GM12878 (cell line): ENCODE measurements at regions of chr13 and their contacts with region 1.

Region 1: GRCh38 chr13:26985285-26985878 is 186.2 kb downstream of the USP12 start:
- DNase-seq: peak; percentile 49
- ATAC-seq: peak; percentile 91
- H3K4me3 ChIP-seq: no peak overlapping the region
- H3K27ac ChIP-seq: no peak overlapping the region
- H3K4me1 ChIP-seq: no peaks in the 10 kb centered on the region
- H3K27me3 ChIP-seq: no peaks in the 10 kb centered on the region
- CTCF ChIP-seq: peak; percentile 64 to 93 (median 68); a peak in 4 of 6 replicates
- EP300 ChIP-seq: no peak
- POLR2A ChIP-seq: no peak
- RAD21 ChIP-seq: peak; percentile 93

Region 2: GRCh38 chr13:26401578-26402021 is 583.8 kb before region 1 on chr13:
- CTCF ChIA-PET with region 1: no interaction called
- POLR2A ChIA-PET with region 1: no interaction called
- RAD21 ChIA-PET with region 1: no interaction called
- SMC1A ChIA-PET with region 1: no interaction called
- in situ Hi-C with region 1: no loop called
- intact Hi-C with region 1: no loop called
- DNase-seq: no peak
- ATAC-seq: no peak
- H3K4me3 ChIP-seq: no peak overlapping the region
- H3K27ac ChIP-seq: no peak overlapping the region
- H3K4me1 ChIP-seq: no peaks in the 10 kb centered on the region
- H3K27me3 ChIP-seq: no peaks in the 10 kb centered on the region
- CTCF ChIP-seq: no peak
- EP300 ChIP-seq: no peak
- POLR2A ChIP-seq: no peak
- RAD21 ChIP-seq: no peak

Region 3: DNA sequence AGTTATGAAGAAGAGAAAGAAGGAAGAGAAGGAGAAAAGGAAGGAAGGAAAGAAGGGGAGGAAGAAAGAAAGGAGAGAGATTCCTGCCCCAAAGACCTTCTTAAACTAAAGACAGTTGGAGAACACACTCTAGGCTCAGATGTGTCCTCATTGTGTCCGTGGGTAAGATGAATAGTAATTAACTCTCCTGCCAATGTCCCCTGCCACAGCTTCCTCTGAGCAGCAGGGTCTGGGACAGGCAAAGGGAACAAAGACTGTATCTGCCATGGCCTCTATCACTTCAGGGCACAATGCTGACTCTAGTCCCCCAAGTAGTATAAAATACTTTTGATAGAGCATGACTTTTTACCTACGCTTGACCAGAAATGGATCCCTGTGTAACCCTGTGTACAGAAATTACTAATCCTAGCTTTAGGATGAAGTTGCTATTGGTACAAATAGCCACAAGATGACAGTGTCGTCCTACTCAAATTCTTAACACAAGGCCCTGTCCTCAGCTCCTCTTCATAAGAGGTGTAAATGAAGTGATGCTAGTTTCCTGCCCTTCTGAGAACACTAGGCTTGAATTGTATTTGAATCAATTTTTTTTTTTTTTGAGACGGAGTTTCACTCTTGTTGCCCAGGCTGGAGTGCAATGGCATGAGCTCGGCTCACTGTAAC is 38.6 kb before region 1 on chr13:
- CTCF ChIA-PET with region 1: interaction called, 18 read pairs
- POLR2A ChIA-PET with region 1: no interaction called
- RAD21 ChIA-PET with region 1: interaction called, 26 read pairs
- SMC1A ChIA-PET with region 1: interaction called, 16 read pairs
- in situ Hi-C with region 1: loop called (anchors 5 kb)
- intact Hi-C with region 1: no loop called
- DNase-seq: peak; percentile 16
- ATAC-seq: peak; percentile 95
- H3K4me3 ChIP-seq: no peak overlapping the region
- H3K27ac ChIP-seq: no peak overlapping the region
- H3K4me1 ChIP-seq: no peaks in the 10 kb centered on the region
- H3K27me3 ChIP-seq: peaks cover 0 to 1% of the 10 kb centered on the region in 2 experiments; a peak in 1 of 4 replicates
- CTCF ChIP-seq: peak; percentile 68 to 86 (median 71)
- EP300 ChIP-seq: no peak
- POLR2A ChIP-seq: no peak
- RAD21 ChIP-seq: peak; percentile 82

Region 4: DNA sequence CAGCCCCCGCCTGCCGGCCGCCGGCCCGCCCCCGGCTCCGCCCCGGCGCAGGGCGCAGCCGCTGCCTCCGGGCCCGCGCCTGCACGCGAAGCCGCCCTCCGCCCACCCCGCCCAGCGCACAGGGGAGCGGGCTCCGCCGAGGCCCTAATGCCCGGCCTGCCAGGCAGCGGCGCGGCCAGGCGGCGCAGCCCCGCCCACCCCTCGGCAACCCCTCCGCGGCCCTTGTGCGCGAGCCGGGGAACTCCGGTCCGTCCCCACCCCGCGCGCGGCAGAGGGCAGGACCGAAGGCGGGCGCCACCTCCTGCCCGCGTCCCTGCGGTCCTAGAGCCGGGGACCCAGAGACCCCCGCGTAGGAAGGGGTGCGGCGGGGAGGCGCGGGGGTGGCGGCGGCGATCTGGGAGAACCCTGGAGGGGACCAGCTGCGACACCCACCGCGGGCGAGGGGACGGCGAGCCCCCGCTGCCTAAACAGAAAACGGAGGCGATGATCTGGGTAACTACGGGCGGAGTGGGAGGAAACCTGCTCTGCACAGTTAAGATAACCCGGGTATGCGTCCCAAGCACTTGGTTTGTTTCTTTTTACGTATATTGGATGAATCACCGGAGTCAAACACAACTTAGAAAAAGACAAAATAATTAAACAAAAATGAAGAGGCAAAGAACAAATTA is 186.6 kb after region 1 on chr13:
- CTCF ChIA-PET with region 1: interaction called, 9 read pairs
- POLR2A ChIA-PET with region 1: no interaction called
- RAD21 ChIA-PET with region 1: interaction called, 8 read pairs
- SMC1A ChIA-PET with region 1: no interaction called
- in situ Hi-C with region 1: no loop called
- intact Hi-C with region 1: loop called (anchors 10 kb)
- DNase-seq: no peak
- ATAC-seq: peak; percentile 87
- H3K4me3 ChIP-seq: peak overlapping the region; percentile 59
- H3K27ac ChIP-seq: peak overlapping the region; percentile 74
- H3K4me1 ChIP-seq: peaks cover 11% of the 10 kb centered on the region
- H3K27me3 ChIP-seq: no peaks in the 10 kb centered on the region
- CTCF ChIP-seq: peak in 2 of 3 experiments; percentile 7 to 19; a peak in 1 of 6 replicates
- EP300 ChIP-seq: peak in 1 of 2 experiments; percentile 26; a peak in 1 of 4 replicates
- POLR2A ChIP-seq: peak; percentile 7; the same call in 1 of the 2 replicates
- RAD21 ChIP-seq: peak; percentile 23; the same call in 1 of the 2 replicates

Region 5: DNA sequence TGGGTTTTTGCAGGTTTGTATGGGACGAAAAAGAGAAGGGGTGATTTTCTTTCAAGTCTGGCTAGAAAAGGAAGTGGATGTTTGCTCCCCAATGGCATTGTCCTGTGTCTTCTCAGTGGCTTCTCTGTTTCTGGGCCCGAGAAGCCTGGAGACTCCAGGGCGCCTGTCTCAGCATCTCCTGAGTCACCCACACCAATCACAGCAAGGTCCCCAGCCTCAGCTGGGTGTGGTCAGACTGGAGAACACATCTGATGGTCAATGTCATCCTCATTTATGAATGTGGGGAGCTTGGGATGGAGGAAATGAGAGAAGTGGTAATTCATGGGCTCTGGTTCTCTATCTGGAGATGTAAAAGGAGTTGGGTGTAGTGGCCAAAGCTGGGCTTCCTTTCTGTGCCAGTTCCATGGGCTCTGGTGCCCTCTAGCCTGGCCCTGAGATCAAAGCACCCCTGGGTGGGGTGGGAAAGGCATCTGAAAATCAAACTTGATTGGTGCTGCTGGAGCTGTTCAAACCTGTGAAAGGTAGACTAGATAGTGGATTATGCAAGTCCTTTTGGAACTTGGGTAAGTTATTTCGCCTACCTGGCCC is 298.6 kb after region 1 on chr13:
- CTCF ChIA-PET with region 1: interaction called, 19 read pairs
- POLR2A ChIA-PET with region 1: no interaction called
- RAD21 ChIA-PET with region 1: interaction called, 17 read pairs
- SMC1A ChIA-PET with region 1: interaction called, 35 read pairs
- in situ Hi-C with region 1: loop called (anchors 5 kb)
- intact Hi-C with region 1: loop called (anchors 1 kb)
- DNase-seq: no peak
- ATAC-seq: peak; percentile 92
- H3K4me3 ChIP-seq: no peak overlapping the region
- H3K27ac ChIP-seq: no peak overlapping the region
- H3K4me1 ChIP-seq: no peaks in the 10 kb centered on the region
- H3K27me3 ChIP-seq: no peaks in the 10 kb centered on the region; a peak in 1 of 4 replicates
- CTCF ChIP-seq: peak; percentile 45 to 62 (median 57); a peak in 5 of 6 replicates
- EP300 ChIP-seq: no peak
- POLR2A ChIP-seq: no peak
- RAD21 ChIP-seq: peak; percentile 68

Region 6: GRCh38 chr13:27362064-27362883 is 376.9 kb after region 1 on chr13:
- CTCF ChIA-PET with region 1: interaction called, 147 read pairs
- POLR2A ChIA-PET with region 1: no interaction called
- RAD21 ChIA-PET with region 1: interaction called, 54 read pairs
- SMC1A ChIA-PET with region 1: interaction called, 81 read pairs
- in situ Hi-C with region 1: loop called (anchors 5 kb)
- intact Hi-C with region 1: loop called (anchors 1 kb)
- DNase-seq: no peak
- ATAC-seq: peak; percentile 98
- H3K4me3 ChIP-seq: peak overlapping the region; percentile 29
- H3K27ac ChIP-seq: no peak overlapping the region
- H3K4me1 ChIP-seq: no peaks in the 10 kb centered on the region
- H3K27me3 ChIP-seq: peaks cover 3 to 4% of the 10 kb centered on the region in 2 experiments; a peak in 1 of 4 replicates
- CTCF ChIP-seq: peak; percentile 93 to 96 (median 95)
- EP300 ChIP-seq: no peak
- POLR2A ChIP-seq: no peak
- RAD21 ChIP-seq: peak; percentile 83